Transverse colon (tissue), 4 donors: ENCODE measurements at regions of chr7 and their contacts with region 1.

Region 1: DNA sequence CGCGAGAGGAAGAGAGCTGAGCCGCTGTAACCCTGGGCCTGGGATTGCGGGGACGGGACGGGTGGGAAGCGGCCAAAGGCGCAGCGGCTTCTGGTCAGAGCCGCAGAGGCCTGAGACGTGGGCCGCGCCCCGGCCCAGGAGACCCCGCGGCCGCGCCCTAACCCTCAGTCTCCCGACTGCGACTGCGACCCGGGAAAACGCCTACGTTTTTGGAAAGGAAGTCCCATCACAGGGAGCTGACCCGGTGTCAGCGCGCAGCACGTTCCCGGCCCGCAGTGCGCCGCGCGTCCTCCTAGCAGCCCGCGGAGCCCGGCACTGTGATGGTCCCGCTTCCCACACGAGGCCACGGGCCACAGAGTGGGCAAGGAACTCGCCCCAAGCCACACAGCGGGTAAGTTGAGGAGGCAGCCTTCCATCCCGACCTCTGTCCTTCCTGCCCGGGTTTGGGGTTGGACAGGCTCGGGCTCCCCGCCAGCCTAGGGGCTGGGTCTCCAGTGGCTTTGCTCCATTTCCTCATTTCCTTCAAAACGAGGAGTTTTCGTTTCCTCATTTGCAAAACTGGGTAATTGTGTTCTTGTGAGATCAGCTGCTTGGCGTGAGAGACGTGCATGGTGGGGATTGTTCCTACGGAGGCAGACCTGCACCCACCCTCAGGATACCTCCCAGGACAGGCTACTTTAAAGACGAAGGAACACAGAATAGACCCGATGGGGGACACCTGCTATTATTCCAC is 1.2 kb downstream of the GPNMB start:
- DNase-seq: peak; percentile 21
- H3K4me3 ChIP-seq: peak overlapping the region in 3 of 4 donors; percentile 14 to 42 (median 25)
- H3K27ac ChIP-seq: peak overlapping the region; percentile 57 to 76 (median 70)
- H3K4me1 ChIP-seq: peaks cover 0 to 2% (median 0%) of the 10 kb centered on the region in 4 donors
- H3K27me3 ChIP-seq: peaks cover 59% of the 10 kb centered on the region
- CTCF ChIP-seq: no peak
- EP300 ChIP-seq: no peak
- POLR2A ChIP-seq: peak; percentile 18

Region 2: DNA sequence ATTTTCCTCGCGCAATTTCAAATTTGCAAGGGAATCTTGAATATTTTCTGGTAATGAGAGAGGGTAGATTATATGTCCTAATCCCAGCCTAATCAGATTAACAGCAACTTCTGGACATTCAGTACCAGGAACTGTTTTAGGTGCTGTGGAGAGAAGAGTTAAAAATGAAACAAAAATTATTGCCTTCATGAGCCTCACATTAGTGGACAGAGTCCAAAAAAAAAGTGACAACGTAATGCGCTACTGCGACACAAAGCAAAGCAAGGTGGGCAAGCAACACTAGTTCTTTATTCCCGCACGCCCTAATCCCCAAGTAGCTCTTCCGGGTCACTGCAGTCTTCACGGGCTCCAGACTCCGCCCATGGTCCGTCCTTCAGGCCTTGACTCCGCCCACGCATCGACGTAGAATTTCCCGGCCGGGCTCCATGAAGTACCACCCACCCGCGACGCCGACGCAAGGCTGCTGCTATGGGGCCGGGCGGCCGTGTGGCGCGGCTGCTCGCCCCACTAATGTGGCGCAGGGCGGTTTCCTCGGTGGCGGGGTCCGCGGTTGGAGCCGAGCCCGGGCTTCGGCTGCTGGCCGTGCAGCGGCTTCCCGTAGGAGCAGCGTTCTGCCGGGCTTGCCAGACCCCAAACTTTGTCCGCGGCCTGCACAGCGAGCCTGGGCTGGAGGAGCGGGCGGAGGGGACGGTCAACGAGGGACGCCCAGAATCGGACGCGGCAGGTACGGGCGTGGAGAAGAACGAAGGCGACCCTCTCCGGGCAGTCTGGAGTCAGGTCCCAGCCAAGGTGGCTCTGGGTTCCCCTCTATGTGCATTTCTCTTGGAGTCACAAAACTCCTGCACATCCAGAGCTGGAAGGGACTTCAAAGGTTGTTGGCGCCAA is 51.4 kb after region 1 on chr7 and contains the start of gene MALSU1:
- in situ Hi-C with region 1: no loop called
- intact Hi-C with region 1: loop called (anchors 2 kb)
- DNase-seq: peak; percentile 98
- H3K4me3 ChIP-seq: peak within 1 kb of the TSS; percentile 72 to 97 (median 82)
- H3K27ac ChIP-seq: peak within 1 kb of the TSS; percentile 83 to 91 (median 88)
- H3K4me1 ChIP-seq: peaks cover 8 to 43% (median 15%) of the 10 kb centered on the region in 4 donors
- H3K27me3 ChIP-seq: no peaks in the 10 kb centered on the region
- CTCF ChIP-seq: no peak
- EP300 ChIP-seq: no peak
- POLR2A ChIP-seq: peak; percentile 88
- total RNA-seq, gene MALSU1: 26.2 to 165 (median 50.1) TPM in 3 of 4 donors, not detected in the other